Heart left ventricle (tissue), 16 donors: ENCODE measurements at regions of chr13 and their contacts with region 1.

Region 1: GRCh38 chr13:28658796-28659620 is at the start of gene POMP:
- DNase-seq: peak; percentile 96 to 97 (median 96)
- ATAC-seq: peak; percentile 97 to 98 (median 98)
- H3K4me3 ChIP-seq: peak within 1 kb of the TSS; percentile 63 to 99 (median 88)
- H3K27ac ChIP-seq: peak within 1 kb of the TSS; percentile 88 to 99 (median 96)
- H3K4me1 ChIP-seq: peaks cover 10 to 71% (median 44%) of the 10 kb centered on the region in 12 donors
- H3K27me3 ChIP-seq: no peaks in the 10 kb centered on the region
- CTCF ChIP-seq: peak in 2 of 12 donors; percentile 3 to 9
- POLR2A ChIP-seq: peak; percentile 43 to 89
- total RNA-seq, gene POMP: 87.8 to 120 (median 102) TPM

Region 2: GRCh38 chr13:28138012-28138755 is 520.8 kb before region 1 on chr13 and contains the start of gene PAN3:
- intact Hi-C with region 1: loop called in 1 of 10 experiments (anchors 10 kb)
- DNase-seq: peak; percentile 92 to 98 (median 94)
- ATAC-seq: peak; percentile 75 to 89 (median 88)
- H3K4me3 ChIP-seq: peak within 1 kb of the TSS; percentile 51 to 100 (median 92)
- H3K27ac ChIP-seq: peak within 1 kb of the TSS; percentile 73 to 99 (median 98)
- H3K4me1 ChIP-seq: peaks cover 0 to 48% (median 26%) of the 10 kb centered on the region in 12 donors
- H3K27me3 ChIP-seq: no peaks in the 10 kb centered on the region
- CTCF ChIP-seq: peak in 4 of 12 donors; percentile 15 to 44 (median 25)
- POLR2A ChIP-seq: peak in 1 of 2 donors; percentile 58
- total RNA-seq, gene PAN3: 7.4 to 18.8 (median 9.5) TPM

Region 3: GRCh38 chr13:28475916-28476725 is 182.9 kb before region 1 on chr13:
- intact Hi-C with region 1: no loop called
- DNase-seq: no peak
- ATAC-seq: peak in 3 of 4 donors; percentile 35 to 82 (median 69)
- H3K4me3 ChIP-seq: no peak overlapping the region
- H3K27ac ChIP-seq: no peak overlapping the region
- H3K4me1 ChIP-seq: peaks cover 3 to 55% (median 19%) of the 10 kb centered on the region in 12 donors
- H3K27me3 ChIP-seq: no peaks in the 10 kb centered on the region
- CTCF ChIP-seq: no peak
- POLR2A ChIP-seq: no peak

Region 4: GRCh38 chr13:28531077-28531844 is 127.7 kb before region 1 on chr13:
- intact Hi-C with region 1: loop called in 1 of 10 experiments (anchors 2 kb)
- DNase-seq: peak; percentile 72 to 82 (median 76)
- ATAC-seq: peak; percentile 40 to 83 (median 68)
- H3K4me3 ChIP-seq: peak overlapping the region; percentile 1 to 67 (median 58)
- H3K27ac ChIP-seq: peak overlapping the region; percentile 55 to 90 (median 86)
- H3K4me1 ChIP-seq: peaks cover 0 to 32% (median 13%) of the 10 kb centered on the region in 12 donors
- H3K27me3 ChIP-seq: peaks cover 0 to 35% (median 15%) of the 10 kb centered on the region in 9 donors
- CTCF ChIP-seq: no peak
- POLR2A ChIP-seq: no peak

Region 5: DNA sequence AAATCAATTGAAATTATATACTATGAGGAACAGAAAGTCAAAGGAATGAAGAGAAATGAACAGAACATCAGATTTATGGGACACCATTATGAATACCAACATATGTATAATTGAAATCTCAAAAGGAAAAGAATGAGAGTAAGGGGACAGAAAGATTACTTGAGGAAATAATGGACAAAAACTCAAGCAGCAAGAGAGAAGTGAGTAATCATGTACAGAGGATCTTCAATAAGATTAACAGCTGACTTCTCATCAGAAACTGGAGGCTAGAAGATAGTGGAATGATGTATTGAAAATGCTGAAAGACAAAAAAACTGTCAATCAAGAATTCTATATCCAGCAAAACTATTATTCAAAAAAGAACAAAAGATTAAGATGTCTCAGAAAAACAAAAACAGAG is 171.6 kb after region 1 on chr13:
- intact Hi-C with region 1: no loop called
- DNase-seq: no peak
- ATAC-seq: no peak
- H3K4me3 ChIP-seq: no peak overlapping the region
- H3K27ac ChIP-seq: no peak overlapping the region
- H3K4me1 ChIP-seq: no peaks in the 10 kb centered on the region
- H3K27me3 ChIP-seq: no peaks in the 10 kb centered on the region
- CTCF ChIP-seq: no peak
- POLR2A ChIP-seq: no peak